ENCODE measurements at regions of chr3 and their contacts with region 1.

Region 1: DNA sequence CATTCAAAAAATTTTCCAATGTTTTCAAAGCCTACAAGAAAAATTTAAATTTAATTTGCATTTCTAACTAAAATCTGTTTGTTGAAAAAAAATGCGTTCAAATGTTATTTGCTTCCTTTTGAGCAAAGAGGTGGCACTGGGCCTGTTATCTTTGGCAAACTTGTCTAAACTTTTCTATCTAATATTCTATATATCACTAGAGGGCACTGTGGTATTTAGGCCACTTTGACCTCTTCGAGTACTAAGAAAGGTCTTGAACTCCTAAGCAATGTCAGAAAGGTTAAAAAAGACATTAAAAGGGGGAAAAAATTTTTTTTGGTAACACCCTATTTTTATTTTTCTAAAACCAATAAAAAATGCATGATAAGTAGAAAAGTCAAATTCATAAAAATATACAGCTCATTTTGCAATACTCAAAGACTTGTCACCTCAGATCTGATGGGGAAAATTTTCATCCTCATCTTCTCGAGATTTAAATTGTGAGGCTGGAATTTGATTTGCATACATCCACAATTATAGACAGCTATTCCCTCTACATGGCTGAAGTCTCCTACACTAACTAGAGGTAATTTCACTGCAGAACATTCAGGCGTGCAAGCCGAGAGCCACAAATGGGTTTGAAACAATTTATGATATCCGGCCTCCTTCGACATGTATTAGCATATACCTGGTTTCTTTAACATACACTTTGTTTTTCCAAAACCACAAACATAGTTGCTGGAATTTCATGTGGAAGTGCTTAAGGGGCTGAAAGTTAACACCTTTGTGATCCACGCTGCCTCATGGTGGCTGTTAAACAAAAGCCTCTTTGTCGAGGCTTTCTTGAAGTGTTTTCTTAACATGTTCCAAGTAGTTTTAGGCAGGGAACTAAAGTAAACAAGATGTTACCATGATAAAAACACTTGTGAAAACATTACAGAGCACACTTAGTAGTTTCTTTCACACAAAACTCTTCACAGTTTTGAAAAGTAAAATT is 576.4 kb downstream of the FOXP1 start:
- DNase-seq: no peak
- H3K4me3 Mint-ChIP-seq: no peak overlapping the region
- H3K27ac Mint-ChIP-seq: peak overlapping the region; percentile 71
- H3K4me1 Mint-ChIP-seq: peaks cover 77% of the 10 kb centered on the region
- H3K27me3 Mint-ChIP-seq: no peaks in the 10 kb centered on the region

Region 2: GRCh38 chr3:70716832-70717231 is 290.3 kb before region 1 on chr3:
- CTCF ChIA-PET with region 1: no interaction called
- intact Hi-C with region 1: loop called (anchors 2 kb)
- DNase-seq: peak; percentile 24
- H3K4me3 Mint-ChIP-seq: no peak overlapping the region
- H3K27ac Mint-ChIP-seq: no peak overlapping the region
- H3K4me1 Mint-ChIP-seq: peaks cover 2% of the 10 kb centered on the region
- H3K27me3 Mint-ChIP-seq: peaks cover 4% of the 10 kb centered on the region

Region 3: DNA sequence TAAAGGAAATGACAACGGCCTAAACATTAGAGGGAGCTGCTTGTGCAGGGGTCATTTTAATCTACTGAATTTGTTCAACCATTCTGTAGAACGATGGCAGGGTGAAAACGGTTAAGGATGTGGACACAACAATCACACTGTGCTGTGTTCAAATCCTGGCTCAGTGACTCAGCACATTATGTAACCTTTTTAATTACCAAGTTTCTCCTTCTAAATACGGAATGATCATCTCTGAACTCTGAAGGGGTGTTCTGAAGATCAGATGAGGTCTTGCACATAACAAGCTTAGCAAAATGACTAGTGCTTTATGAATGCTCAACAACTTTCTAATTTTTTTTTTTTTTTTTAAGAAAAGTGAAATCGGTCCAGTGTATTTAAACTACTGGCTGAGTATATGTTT is 16.4 kb before region 1 on chr3:
- CTCF ChIA-PET with region 1: interaction called, 8 read pairs
- intact Hi-C with region 1: loop called (anchors 1 kb)
- DNase-seq: peak; percentile 34
- H3K4me3 Mint-ChIP-seq: no peak overlapping the region
- H3K27ac Mint-ChIP-seq: peak overlapping the region; percentile 83
- H3K4me1 Mint-ChIP-seq: peaks cover 66% of the 10 kb centered on the region
- H3K27me3 Mint-ChIP-seq: no peaks in the 10 kb centered on the region

Region 4: DNA sequence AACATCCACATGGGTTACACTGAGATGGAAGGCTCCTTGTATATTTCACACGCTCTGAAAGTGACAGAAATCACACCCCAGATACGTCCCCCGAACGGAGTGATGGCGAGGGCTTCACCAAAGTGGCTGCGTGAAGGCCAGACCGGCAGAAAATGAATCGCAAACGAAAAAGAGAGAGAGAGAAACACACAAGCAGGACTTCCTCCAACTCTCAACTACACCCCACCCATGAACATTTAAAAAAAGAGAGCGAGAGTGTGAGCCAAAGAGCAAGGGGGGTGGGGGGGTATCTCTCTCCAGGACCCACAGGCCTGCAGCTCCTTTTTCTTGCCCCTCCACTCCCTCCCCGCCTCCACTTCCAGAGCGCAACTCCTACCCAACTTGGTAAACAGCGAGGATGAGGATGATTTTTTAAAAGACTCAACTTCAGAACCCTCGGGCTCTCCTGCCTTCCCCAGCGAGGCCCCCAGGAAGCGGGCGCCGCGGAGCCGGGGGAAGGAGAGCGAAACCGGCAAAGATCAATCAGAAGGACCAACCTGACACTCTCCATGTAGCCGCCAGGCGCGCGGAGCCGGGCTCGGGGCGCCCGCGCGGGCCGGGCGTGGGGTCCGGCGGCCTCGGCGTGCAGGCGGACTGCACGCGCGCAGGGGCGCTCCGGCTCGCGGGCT is 57.3 kb after region 1 on chr3:
- CTCF ChIA-PET with region 1: interaction called, 7 read pairs
- intact Hi-C with region 1: loop called (anchors 1 kb)
- DNase-seq: peak; percentile 69
- H3K4me3 Mint-ChIP-seq: no peak overlapping the region
- H3K27ac Mint-ChIP-seq: no peak overlapping the region
- H3K4me1 Mint-ChIP-seq: peaks cover 51% of the 10 kb centered on the region
- H3K27me3 Mint-ChIP-seq: no peaks in the 10 kb centered on the region

Region 5: DNA sequence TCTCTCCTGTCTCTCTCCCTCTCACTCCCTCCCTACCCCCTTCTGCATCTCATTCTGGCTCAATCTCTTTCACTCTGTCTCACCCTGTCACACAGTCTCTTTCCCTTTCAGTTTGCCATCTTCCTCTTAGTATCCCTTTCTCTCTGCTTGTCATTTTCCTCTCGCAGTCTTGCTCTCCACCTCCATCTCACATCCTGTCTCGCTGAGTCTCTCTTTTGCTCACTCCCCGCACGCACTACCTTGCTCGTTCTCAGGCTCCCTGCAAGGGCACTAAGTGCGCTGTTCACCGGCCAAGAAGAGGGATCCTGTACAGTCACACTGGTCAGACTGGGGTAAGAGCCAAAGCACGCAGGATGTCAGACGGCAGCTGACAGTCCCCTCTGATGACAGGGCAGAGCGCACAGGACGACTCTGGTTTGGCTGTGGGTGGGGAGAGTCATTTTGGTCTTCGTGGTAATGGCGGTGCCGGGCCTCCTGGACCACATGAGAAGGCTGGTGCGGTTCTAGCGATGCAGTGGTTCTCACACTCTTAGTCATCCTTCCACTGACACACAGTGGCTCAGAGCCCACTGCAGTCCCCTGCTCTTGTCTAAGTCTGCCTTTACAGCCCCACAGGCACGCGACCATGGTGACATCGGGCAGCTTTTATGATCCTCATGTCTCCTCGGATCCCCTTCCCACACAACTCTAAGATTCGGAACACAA is 219.6 kb after region 1 on chr3:
- CTCF ChIA-PET with region 1: interaction called, 3 read pairs
- intact Hi-C with region 1: loop called (anchors 1 kb)
- DNase-seq: peak; percentile 95
- H3K4me3 Mint-ChIP-seq: peak overlapping the region; percentile 77
- H3K27ac Mint-ChIP-seq: peak overlapping the region; percentile 94
- H3K4me1 Mint-ChIP-seq: peaks cover 83% of the 10 kb centered on the region
- H3K27me3 Mint-ChIP-seq: no peaks in the 10 kb centered on the region

Region 6: DNA sequence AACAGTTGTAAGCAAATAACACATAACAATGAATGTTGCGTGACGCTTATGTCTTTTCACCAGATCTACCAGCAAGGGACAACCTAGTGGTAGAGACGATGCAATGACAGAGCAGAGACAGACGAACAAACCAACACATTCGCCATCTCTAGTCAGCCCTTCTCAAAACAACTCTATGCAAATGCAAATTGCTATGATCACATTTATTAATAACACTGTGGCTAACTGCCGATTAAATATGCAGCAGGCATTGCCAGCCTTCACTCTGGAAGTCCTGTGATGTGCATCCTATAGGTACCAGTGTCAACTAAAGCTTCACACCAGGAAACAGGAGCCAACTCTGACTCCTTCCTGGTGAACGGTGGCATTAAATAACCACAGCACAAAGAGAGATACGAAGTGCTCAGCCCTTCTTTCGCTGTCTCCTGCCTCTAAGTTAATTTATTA is 482.2 kb after region 1 on chr3:
- CTCF ChIA-PET with region 1: no interaction called
- intact Hi-C with region 1: loop called (anchors 2 kb)
- DNase-seq: peak; percentile 35
- H3K4me3 Mint-ChIP-seq: peak overlapping the region; percentile 67
- H3K27ac Mint-ChIP-seq: peak overlapping the region; percentile 88
- H3K4me1 Mint-ChIP-seq: peaks cover 88% of the 10 kb centered on the region
- H3K27me3 Mint-ChIP-seq: no peaks in the 10 kb centered on the region

Measured in activated naive CD4-positive, alpha-beta T cell treated with anti-CD3 and anti-CD28 coated beads for 36 hours (primary cell).